ENCODE measurements at regions of chr7 and their contacts with region 1.

Region 1: GRCh38 chr7:128855559-128855958 is 7.1 kb upstream of the ATP6V1F start:
- DNase-seq: no peak
- H3K4me3 ChIP-seq: no peak overlapping the region
- H3K27ac ChIP-seq: no peak overlapping the region
- H3K27me3 ChIP-seq: no peaks in the 10 kb centered on the region
- CTCF ChIP-seq: no peak

Region 2: GRCh38 chr7:128841921-128842651 is 13.5 kb before region 1 on chr7:
- intact Hi-C with region 1: loop called in 1 of 2 experiments (anchors 2 kb)
- DNase-seq: peak in 1 of 10 donors; percentile 39
- H3K4me3 ChIP-seq: no peak overlapping the region
- H3K27ac ChIP-seq: peak overlapping the region in 1 of 59 donors; percentile 4
- H3K27me3 ChIP-seq: no peaks in the 10 kb centered on the region
- CTCF ChIP-seq: peak; percentile 31 to 80 (median 68)

Region 3: DNA sequence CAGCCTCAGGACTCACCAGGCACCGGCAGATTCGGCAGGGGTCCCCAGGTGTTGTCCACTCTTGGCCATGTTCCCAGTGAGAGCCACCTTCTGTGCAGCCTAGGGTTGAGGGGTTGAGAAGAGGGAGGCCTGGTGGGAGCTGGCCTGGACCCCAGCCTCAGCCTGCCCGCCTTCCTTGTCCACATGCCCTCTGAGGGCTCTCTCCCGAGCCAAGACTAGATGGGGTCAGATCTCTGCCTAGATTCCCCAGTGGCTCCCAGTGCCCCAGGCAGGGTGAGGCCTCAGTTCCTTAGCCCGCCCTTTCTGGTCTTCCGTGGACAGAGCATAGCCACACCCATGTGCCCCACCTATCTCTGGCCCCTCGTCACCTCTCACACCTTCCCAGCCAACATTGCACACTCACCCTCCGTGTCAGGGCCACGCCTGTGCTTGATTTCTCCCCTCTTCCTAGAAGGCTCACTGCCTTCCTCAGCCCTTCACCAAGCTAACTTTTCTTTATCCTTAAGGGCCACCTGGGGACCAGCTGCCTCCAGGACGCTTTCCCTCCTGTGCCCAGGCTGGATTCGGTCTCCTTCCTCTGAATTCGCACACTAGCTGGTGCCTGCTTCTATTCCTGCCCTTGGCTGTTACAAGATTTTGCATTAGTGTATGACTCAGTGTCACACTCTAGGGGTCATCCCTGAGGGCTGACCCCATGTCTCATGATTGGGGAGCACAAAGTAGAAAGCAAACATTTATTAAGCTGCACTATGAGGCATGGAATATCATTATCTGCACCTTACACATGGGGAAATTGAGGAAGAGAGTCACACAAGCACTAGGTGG is 47.4 kb after region 1 on chr7:
- intact Hi-C with region 1: no loop called
- DNase-seq: no peak
- H3K4me3 ChIP-seq: no peak overlapping the region
- H3K27ac ChIP-seq: no peak overlapping the region
- H3K27me3 ChIP-seq: peaks cover 0 to 27% (median 5%) of the 10 kb centered on the region in 45 donors
- CTCF ChIP-seq: no peak

Region 4: GRCh38 chr7:128922496-128923410 is 67.2 kb after region 1 on chr7:
- intact Hi-C with region 1: no loop called
- DNase-seq: peak in 1 of 10 donors; percentile 9
- H3K4me3 ChIP-seq: no peak overlapping the region
- H3K27ac ChIP-seq: no peak overlapping the region
- H3K27me3 ChIP-seq: peaks cover 0 to 14% (median 0%) of the 10 kb centered on the region in 45 donors
- CTCF ChIP-seq: no peak